ENCODE measurements at regions of chr5 and their contacts with region 1.

Region 1: GRCh38 chr5:115785381-115786065 is 30.9 kb downstream of the CDO1 start:
- DNase-seq: no peak
- H3K4me3 ChIP-seq: no peak overlapping the region
- H3K27ac ChIP-seq: no peak overlapping the region
- H3K4me1 ChIP-seq: no peaks in the 10 kb centered on the region
- H3K27me3 ChIP-seq: peaks cover 0 to 3% of the 10 kb centered on the region in 2 experiments
- CTCF ChIP-seq: no peak
- POLR2A ChIP-seq: no peak

Region 2: GRCh38 chr5:115709585-115709984 is 75.9 kb before region 1 on chr5:
- CTCF ChIA-PET with region 1: no interaction called
- POLR2A ChIA-PET with region 1: no interaction called
- dilution Hi-C with region 1: no loop called
- intact Hi-C with region 1: loop called (anchors 5 kb)
- DNase-seq: no peak
- H3K4me3 ChIP-seq: no peak overlapping the region
- H3K27ac ChIP-seq: no peak overlapping the region
- H3K4me1 ChIP-seq: no peaks in the 10 kb centered on the region
- H3K27me3 ChIP-seq: no peaks in the 10 kb centered on the region
- CTCF ChIP-seq: no peak
- POLR2A ChIP-seq: no peak